GM12878 (cell line): ENCODE measurements at regions of chr3 and their contacts with region 1.

Region 1: DNA sequence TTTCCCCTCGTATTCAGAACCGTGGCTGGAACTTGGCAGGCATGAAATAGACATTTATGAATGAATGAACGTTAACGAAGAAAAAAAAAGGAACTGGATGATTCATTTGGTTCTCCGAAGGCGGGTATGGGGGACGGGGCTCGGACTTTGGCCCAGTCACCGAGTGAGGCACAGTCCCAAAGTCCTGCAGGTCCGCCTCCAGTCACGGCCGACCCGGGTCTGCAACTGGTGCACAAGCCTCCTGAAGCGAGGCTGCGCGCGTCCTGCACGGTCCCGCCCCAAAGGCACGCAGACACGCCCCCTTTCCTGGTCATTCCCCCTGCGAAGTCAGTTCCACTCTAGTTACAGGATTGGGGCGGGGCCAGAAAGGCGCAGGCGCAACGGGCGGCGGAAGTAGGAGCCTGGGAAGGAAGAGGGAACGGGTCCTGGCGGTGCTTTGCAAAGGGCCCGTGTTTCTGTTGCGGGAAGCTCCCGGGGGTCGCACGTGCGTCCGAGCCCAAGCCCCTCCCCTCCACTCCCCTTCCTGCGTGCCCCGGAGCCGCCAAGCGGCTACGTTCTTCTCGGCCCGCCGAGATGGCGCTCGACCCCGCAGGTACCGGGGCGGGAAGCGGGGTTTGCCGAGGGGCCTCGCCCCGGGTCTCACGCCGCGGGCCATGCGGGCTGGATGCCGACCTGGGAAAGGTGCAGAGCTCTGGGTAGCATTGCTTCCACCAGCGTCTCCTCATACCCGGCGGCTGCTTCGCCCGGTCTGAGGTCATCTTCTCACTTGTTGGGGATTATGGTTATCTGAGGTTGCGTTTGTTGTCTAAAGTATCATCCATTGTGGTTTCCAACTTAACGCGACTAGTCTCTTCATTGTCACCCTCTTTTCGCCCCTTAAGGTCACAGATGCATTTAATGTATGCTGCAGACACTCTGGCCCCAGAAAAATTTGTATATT is at the start of gene CMC1:
- DNase-seq: peak; percentile 85
- ATAC-seq: peak; percentile 95
- H3K4me3 ChIP-seq: peak within 1 kb of the TSS; percentile 81
- H3K27ac ChIP-seq: peak within 1 kb of the TSS; percentile 79
- H3K4me1 ChIP-seq: no peaks in the 10 kb centered on the region
- H3K27me3 ChIP-seq: no peaks in the 10 kb centered on the region
- CTCF ChIP-seq: no peak
- EP300 ChIP-seq: peak; percentile 24 to 28; a peak in 2 of 4 replicates
- POLR2A ChIP-seq: peak; percentile 84
- RAD21 ChIP-seq: no peak
- polyA plus RNA-seq, gene CMC1: 26.9 to 41.2 TPM

Region 2: GRCh38 chr3:28104896-28105534 is 136.5 kb before region 1 on chr3:
- CTCF ChIA-PET with region 1: no interaction called
- POLR2A ChIA-PET with region 1: no interaction called
- RAD21 ChIA-PET with region 1: no interaction called
- SMC1A ChIA-PET with region 1: no interaction called
- in situ Hi-C with region 1: no loop called
- intact Hi-C with region 1: no loop called
- DNase-seq: no peak
- ATAC-seq: no peak
- H3K4me3 ChIP-seq: no peak overlapping the region
- H3K27ac ChIP-seq: no peak overlapping the region
- H3K4me1 ChIP-seq: no peaks in the 10 kb centered on the region
- H3K27me3 ChIP-seq: no peaks in the 10 kb centered on the region
- CTCF ChIP-seq: no peak
- EP300 ChIP-seq: no peak
- POLR2A ChIP-seq: no peak
- RAD21 ChIP-seq: no peak

Region 3: DNA sequence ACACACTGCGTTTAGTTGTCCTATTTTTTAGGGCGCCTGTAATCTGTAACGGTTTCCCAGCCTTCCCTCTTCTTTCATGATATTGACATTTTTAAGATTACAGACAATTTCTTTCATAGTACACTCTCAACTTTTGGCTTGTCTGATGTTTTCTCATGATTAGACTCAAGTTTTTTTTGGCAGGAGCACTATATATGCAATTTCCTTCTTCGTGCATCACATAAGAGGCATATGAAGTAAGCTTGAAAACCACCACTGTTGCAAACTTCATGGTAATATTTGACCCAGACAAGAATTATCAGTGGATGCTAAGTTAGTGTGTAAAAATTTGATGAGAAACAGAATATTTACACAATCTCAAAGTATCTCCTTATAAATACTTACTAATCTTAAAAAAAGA is 119.3 kb before region 1 on chr3:
- CTCF ChIA-PET with region 1: no interaction called
- POLR2A ChIA-PET with region 1: no interaction called
- RAD21 ChIA-PET with region 1: interaction called, 3 read pairs
- SMC1A ChIA-PET with region 1: interaction called, 15 read pairs
- in situ Hi-C with region 1: no loop called
- intact Hi-C with region 1: no loop called
- DNase-seq: no peak
- ATAC-seq: no peak
- H3K4me3 ChIP-seq: no peak overlapping the region
- H3K27ac ChIP-seq: no peak overlapping the region
- H3K4me1 ChIP-seq: no peaks in the 10 kb centered on the region
- H3K27me3 ChIP-seq: no peaks in the 10 kb centered on the region
- CTCF ChIP-seq: no peak
- EP300 ChIP-seq: no peak
- POLR2A ChIP-seq: no peak
- RAD21 ChIP-seq: no peak

Region 4: GRCh38 chr3:28224430-28224829 is 17.1 kb before region 1 on chr3:
- CTCF ChIA-PET with region 1: interaction called, 3 read pairs
- POLR2A ChIA-PET with region 1: interaction called, 31 read pairs
- RAD21 ChIA-PET with region 1: interaction called, 4 read pairs
- SMC1A ChIA-PET with region 1: interaction called, 12 read pairs
- in situ Hi-C with region 1: no loop called
- intact Hi-C with region 1: no loop called
- DNase-seq: no peak
- ATAC-seq: no peak
- H3K4me3 ChIP-seq: no peak overlapping the region
- H3K27ac ChIP-seq: no peak overlapping the region
- H3K4me1 ChIP-seq: no peaks in the 10 kb centered on the region
- H3K27me3 ChIP-seq: no peaks in the 10 kb centered on the region
- CTCF ChIP-seq: no peak
- EP300 ChIP-seq: no peak
- POLR2A ChIP-seq: no peak
- RAD21 ChIP-seq: no peak

Region 5: DNA sequence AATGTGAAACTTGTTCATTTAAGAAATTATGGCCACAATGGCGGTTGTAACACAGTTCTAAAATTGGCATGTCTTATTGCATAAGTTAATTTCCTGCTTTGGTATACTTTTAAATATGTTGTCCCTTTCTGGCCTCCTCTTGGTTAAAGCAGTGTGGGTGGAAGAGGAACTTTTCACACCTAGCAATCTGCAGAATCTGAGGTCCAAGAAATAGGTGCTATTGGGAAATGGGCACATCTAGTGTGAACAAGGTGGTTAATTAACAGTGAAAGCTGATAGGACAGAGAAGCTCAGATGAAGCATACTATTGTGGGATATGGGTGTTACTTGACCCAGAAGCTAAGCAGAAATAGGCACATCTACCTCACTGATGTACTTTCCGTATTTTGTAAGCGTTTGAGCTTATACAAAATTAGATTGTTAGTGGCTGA is 10.5 kb after region 1 on chr3:
- CTCF ChIA-PET with region 1: interaction called, 3 read pairs
- POLR2A ChIA-PET with region 1: interaction called, 14 read pairs
- RAD21 ChIA-PET with region 1: interaction called, 10 read pairs
- SMC1A ChIA-PET with region 1: interaction called, 43 read pairs
- in situ Hi-C with region 1: no loop called
- intact Hi-C with region 1: no loop called
- DNase-seq: no peak
- ATAC-seq: peak; percentile 86
- H3K4me3 ChIP-seq: no peak overlapping the region
- H3K27ac ChIP-seq: no peak overlapping the region
- H3K4me1 ChIP-seq: no peaks in the 10 kb centered on the region; the same call in 1 of the 2 replicates
- H3K27me3 ChIP-seq: no peaks in the 10 kb centered on the region
- CTCF ChIP-seq: no peak
- EP300 ChIP-seq: peak in 1 of 2 experiments; percentile 46; a peak in 2 of 4 replicates
- POLR2A ChIP-seq: no peak
- RAD21 ChIP-seq: no peak